Activated T-helper 2 cell treated with anti-CD3 and anti-CD28 coated beads, Interferon-gamma antibody, Interleukin-2, Interleukin-4, amounts not matched to agents 10 μg/mL and 5 μg/mL and 100 μg/mL, durations not matched to agents 14 hours and 24 hours and 36 hours (primary cell): ENCODE measurements at regions of chr5 and their contacts with region 1.

Region 1: DNA sequence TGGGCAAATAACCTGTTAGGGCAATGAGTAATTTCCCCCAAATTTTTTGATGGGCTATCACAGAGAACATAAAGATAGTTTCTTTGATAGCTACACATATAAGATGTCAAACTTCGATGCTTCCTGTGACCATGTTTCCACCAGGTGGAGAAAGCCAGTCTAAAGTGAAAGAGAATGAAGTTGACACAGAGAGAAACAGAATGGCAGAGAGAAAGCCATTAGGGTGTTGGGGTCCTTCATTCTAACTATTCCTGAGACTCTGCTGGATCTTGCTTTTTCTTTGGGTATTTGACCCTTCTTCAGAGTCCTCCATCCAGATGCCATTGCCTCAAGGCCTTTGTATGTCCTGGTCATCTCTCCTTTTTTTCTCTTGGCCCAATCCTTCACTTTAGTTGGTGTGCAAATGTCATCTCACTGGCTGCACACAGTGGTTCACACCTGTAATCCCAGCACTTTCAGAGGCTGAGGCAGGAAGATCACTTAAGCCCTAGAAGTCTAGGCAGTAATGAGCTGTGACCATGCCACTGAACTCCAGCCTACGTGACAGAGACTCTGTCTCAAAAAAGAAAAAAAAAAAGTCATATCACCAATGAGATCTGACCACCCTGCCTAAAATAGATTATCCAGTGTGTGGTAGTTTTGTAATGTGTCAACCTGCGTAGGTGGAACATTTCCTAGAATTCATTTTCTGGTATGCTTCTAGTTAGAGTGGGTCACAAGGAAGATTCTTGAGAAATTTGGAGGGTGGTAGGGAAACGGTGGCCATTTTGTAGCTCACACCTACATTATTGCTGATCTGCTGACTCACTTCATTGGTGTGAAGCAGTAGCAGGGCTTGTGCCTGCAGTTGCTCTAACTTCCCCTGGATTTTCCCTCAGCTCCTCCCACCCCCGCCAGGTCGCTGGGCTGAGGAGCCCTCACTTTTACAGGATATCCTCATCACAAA is 20.8 kb upstream of the KIF2A start:
- DNase-seq: peak; percentile 66
- H3K4me3 Mint-ChIP-seq: peak overlapping the region; percentile 55
- H3K27ac Mint-ChIP-seq: peak overlapping the region; percentile 98
- H3K4me1 Mint-ChIP-seq: peaks cover 78% of the 10 kb centered on the region
- H3K27me3 Mint-ChIP-seq: no peaks in the 10 kb centered on the region

Region 2: GRCh38 chr5:62093976-62094375 is 191.2 kb before region 1 on chr5:
- intact Hi-C with region 1: no loop called
- DNase-seq: no peak
- H3K4me3 Mint-ChIP-seq: no peak overlapping the region
- H3K27ac Mint-ChIP-seq: no peak overlapping the region
- H3K4me1 Mint-ChIP-seq: peaks cover 4% of the 10 kb centered on the region
- H3K27me3 Mint-ChIP-seq: peaks cover 3% of the 10 kb centered on the region

Region 3: GRCh38 chr5:62214701-62215100 is 70.5 kb before region 1 on chr5:
- intact Hi-C with region 1: no loop called
- DNase-seq: no peak
- H3K4me3 Mint-ChIP-seq: no peak overlapping the region
- H3K27ac Mint-ChIP-seq: no peak overlapping the region
- H3K4me1 Mint-ChIP-seq: peaks cover 3% of the 10 kb centered on the region
- H3K27me3 Mint-ChIP-seq: peaks cover 35% of the 10 kb centered on the region

Region 4: DNA sequence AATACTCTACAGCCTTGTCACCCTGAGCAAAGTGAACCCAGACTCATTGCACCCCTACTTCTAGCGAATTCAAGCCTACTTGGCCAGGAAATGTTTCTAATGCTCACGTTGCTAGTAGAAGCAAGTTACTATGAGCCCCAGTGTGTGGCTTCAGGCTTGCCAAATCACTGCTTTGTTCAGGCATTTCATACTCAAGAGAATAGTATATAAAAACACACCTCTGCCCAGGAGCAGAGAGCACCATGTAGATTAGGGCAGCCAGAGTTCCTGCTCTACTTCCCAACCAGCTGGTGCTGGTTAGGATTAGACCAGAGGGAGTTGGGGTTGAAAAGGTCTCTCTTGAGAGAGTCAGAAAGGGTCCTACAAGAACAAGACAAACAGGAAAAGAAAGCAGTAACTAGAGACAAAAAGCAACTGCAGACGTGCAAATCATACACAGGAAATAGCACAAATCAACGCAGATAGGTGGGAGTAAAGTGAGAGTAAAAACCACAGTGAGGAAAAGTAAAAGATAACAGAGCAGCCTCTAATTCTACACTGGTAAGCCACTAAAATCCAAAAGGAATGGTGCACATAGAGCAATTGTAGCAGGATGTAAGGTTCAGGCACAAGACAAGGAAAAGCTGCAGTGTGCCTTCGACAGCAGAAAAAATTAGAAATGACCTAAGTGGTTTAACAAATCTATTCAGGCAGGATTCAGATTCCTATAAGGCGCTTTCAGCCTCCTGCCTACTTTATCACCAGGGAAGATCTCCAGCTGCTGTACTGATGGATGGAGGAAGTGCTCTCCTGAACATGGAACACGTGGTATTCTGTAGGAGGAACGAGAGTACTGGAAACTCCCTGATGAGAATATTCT is 28.8 kb before region 1 on chr5:
- intact Hi-C with region 1: loop called (anchors 1 kb)
- DNase-seq: peak; percentile 14
- H3K4me3 Mint-ChIP-seq: peak overlapping the region; percentile 63
- H3K27ac Mint-ChIP-seq: peak overlapping the region; percentile 94
- H3K4me1 Mint-ChIP-seq: peaks cover 75% of the 10 kb centered on the region
- H3K27me3 Mint-ChIP-seq: no peaks in the 10 kb centered on the region

Region 5: DNA sequence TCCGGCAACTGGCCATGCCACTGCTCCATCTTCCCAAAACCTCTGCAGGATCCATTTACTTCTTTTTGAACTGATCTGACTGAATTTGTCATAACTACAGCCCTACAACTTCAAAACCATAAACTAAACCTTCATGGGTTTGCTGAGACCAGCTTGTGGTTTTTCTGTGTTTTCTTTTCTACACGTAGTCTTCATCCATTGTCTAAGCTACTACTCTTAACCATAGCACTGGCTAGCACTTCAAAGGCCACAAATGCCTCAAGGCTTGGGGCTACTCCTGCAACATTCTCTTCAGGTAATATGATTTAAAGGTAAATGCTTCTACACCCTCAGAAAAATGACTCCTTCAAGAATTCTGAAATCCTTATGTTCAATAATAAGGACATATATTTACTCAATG is 11.8 kb after region 1 on chr5:
- intact Hi-C with region 1: loop called (anchors 1 kb)
- DNase-seq: no peak
- H3K4me3 Mint-ChIP-seq: peak overlapping the region; percentile 22
- H3K27ac Mint-ChIP-seq: peak overlapping the region; percentile 77
- H3K4me1 Mint-ChIP-seq: peaks cover 62% of the 10 kb centered on the region
- H3K27me3 Mint-ChIP-seq: no peaks in the 10 kb centered on the region

Region 6: GRCh38 chr5:62340392-62340791 is 55.2 kb after region 1 on chr5:
- intact Hi-C with region 1: loop called (anchors 2 kb)
- DNase-seq: no peak
- H3K4me3 Mint-ChIP-seq: no peak overlapping the region
- H3K27ac Mint-ChIP-seq: peak overlapping the region; percentile 17
- H3K4me1 Mint-ChIP-seq: peaks cover 57% of the 10 kb centered on the region
- H3K27me3 Mint-ChIP-seq: no peaks in the 10 kb centered on the region

Region 7: GRCh38 chr5:62593331-62593730 is 308.1 kb after region 1 on chr5:
- intact Hi-C with region 1: no loop called
- DNase-seq: no peak
- H3K4me3 Mint-ChIP-seq: no peak overlapping the region
- H3K27ac Mint-ChIP-seq: no peak overlapping the region
- H3K4me1 Mint-ChIP-seq: peaks cover 7% of the 10 kb centered on the region
- H3K27me3 Mint-ChIP-seq: no peaks in the 10 kb centered on the region